ENCODE measurements at regions of chr1 and their contacts with region 1.

Region 1: DNA sequence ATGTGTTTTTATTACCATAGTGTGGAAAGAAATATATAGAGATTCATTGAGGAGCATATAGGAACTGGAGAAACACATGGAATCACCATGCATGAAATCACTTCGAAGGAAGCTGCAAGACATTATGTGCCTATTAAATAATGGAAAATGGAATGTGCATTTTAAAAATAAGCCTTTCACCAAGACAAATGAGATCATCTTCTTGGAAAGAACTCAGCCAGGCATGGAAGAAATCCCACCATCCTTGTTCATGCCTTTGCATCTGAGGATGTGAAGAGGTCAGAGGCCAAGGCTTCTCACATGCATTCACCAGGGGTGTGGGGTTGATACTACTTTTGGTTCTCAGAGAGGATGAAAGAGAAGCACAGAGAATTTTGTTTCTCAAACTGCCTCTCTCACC is 50.0 kb downstream of the C1orf198 start:
- DNase-seq: no peak
- ATAC-seq: no peak
- H3K4me3 ChIP-seq: no peak overlapping the region
- H3K27ac ChIP-seq: no peak overlapping the region
- H3K4me1 ChIP-seq: peaks cover 0 to 56% (median 21%) of the 10 kb centered on the region in 12 donors
- H3K27me3 ChIP-seq: no peaks in the 10 kb centered on the region
- CTCF ChIP-seq: no peak
- POLR2A ChIP-seq: no peak

Region 2: DNA sequence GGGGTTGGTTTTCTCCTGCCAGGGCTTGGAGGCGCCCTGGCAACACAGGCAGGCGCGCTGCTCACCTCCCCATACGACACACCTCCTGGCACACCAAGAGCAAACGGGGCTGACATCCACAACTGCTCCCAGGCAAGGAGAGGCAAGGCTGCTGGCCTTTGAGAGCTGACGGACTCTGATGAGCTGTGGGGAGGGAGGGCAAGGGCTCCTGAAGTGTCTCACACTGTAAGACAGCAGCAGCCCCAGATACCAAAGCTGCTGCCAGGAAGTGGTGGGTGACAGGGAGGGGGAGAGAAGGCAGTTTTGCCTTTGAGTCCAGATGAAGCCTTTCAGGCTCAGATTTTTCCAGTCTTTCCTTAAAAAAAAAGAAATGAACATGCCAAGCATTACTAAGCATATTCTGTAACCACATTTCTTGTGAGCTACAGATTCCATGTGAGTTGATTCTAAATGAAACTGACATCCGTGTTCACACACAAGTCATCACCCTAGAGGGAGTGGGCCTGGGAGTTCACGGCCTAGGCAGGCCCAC is 416.5 kb before region 1 on chr1:
- intact Hi-C with region 1: no loop called
- DNase-seq: no peak
- ATAC-seq: peak in 3 of 4 donors; percentile 33 to 53 (median 37)
- H3K4me3 ChIP-seq: no peak overlapping the region
- H3K27ac ChIP-seq: no peak overlapping the region
- H3K4me1 ChIP-seq: peaks cover 0 to 3% (median 0%) of the 10 kb centered on the region in 12 donors
- H3K27me3 ChIP-seq: no peaks in the 10 kb centered on the region
- CTCF ChIP-seq: no peak
- POLR2A ChIP-seq: no peak

Region 3: GRCh38 chr1:230728710-230729392 is 89.5 kb before region 1 on chr1:
- intact Hi-C with region 1: no loop called
- DNase-seq: peak in 2 of 5 donors; percentile 44 to 51
- ATAC-seq: peak; percentile 19 to 55 (median 39)
- H3K4me3 ChIP-seq: no peak overlapping the region
- H3K27ac ChIP-seq: peak overlapping the region in 9 of 12 donors; percentile 6 to 69 (median 48)
- H3K4me1 ChIP-seq: peaks cover 0 to 54% (median 20%) of the 10 kb centered on the region in 12 donors
- H3K27me3 ChIP-seq: no peaks in the 10 kb centered on the region
- CTCF ChIP-seq: no peak
- POLR2A ChIP-seq: no peak

Region 4: DNA sequence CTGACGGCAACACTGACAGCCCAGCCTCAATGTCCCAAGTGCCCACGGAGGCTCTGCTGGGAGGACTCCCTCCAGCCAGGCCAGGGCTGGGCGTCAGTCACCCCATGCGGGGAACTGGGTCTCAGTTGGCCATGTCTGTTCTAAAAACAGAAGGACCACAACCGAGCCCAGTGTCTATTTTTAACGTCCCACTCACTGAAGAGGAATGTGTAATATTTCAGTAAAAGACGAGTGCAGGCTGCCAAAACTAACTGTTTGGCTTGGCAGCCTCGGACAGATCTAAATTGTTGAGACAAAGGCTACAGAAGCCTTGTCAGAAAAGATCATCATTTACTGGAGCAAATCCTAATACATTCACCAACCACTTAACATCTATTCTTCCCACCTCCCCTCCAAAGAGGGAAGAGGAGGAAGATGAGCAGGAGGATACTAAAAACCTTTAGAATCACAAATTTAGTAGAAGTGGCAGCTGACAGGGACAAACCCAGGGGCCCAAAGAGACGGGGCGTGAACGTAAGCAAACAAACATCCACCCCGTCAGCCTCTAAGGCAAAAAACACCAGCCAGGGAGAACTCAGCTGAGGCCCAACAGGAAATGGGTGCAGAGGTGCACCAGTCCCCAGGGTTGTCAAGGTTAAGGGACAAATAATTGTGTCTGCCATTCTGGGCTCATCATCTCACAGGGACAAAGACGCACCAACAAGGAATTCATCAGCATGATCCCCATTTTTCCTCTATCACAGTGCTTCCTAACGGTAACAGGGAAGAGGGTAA is 31.3 kb after region 1 on chr1:
- intact Hi-C with region 1: loop called in 1 of 10 experiments (anchors 5 kb)
- DNase-seq: peak; percentile 80 to 85 (median 82)
- ATAC-seq: peak; percentile 91 to 94 (median 93)
- H3K4me3 ChIP-seq: peak overlapping the region in 1 of 12 donors; percentile 2
- H3K27ac ChIP-seq: peak overlapping the region; percentile 74 to 92 (median 80)
- H3K4me1 ChIP-seq: peaks cover 4 to 70% (median 50%) of the 10 kb centered on the region in 12 donors
- H3K27me3 ChIP-seq: no peaks in the 10 kb centered on the region
- CTCF ChIP-seq: no peak
- POLR2A ChIP-seq: no peak